ENCODE measurements at regions of chr9 and their contacts with region 1.

Region 1: GRCh38 chr9:75644649-75645048 is 245.8 kb upstream of the PCSK5 start:
- DNase-seq: no peak
- ATAC-seq: peak; percentile 25

Region 2: GRCh38 chr9:75699017-75699416 is 54.4 kb after region 1 on chr9:
- intact Hi-C with region 1: loop called (anchors 10 kb)
- DNase-seq: no peak
- ATAC-seq: peak; percentile 90